Psoas muscle (tissue), 8 donors: ENCODE measurements at regions of chr7 and their contacts with region 1.

Region 1: DNA sequence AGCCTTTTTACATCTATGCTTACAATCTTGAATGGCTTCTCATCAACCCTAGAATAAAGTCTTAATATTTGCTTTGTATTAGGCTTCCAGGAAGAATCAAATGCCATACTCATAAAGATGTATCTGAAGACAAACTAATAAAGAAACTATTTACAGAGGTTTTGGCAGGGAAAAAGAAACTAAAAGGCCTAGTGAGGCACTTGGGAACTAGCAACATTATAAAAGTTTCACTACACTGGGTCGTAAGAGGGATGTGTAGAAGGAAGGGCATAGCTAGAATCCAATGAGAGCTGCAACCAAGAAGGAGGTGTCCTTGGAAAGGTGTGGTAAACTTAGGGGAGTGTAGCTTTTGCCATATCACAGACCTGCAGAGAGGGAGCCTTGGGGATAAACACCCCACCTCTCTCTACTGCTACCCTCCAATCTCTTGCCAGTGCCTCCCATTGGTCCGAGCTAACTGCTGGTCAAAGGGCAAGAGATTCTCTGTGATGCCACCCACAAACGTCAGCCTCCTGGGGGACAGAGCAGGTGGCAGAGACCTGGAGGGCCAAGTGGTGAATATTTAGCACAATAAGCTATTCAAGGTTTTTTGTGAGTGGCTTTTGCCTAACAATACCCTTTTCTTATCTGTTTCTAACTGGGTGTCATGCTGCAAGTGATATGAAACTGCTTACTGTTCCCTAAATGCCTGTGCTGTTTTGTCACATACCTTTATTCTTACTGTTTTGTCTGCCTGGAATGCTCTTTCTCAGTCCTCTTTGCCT is 60.7 kb downstream of the CPED1 start:
- DNase-seq: no peak
- ATAC-seq: peak in 1 of 4 donors; percentile 8
- H3K4me3 ChIP-seq: no peak overlapping the region
- H3K27ac ChIP-seq: peak overlapping the region; percentile 54
- H3K4me1 ChIP-seq: peaks cover 28% of the 10 kb centered on the region
- H3K27me3 ChIP-seq: no peaks in the 10 kb centered on the region
- CTCF ChIP-seq: no peak

Region 2: DNA sequence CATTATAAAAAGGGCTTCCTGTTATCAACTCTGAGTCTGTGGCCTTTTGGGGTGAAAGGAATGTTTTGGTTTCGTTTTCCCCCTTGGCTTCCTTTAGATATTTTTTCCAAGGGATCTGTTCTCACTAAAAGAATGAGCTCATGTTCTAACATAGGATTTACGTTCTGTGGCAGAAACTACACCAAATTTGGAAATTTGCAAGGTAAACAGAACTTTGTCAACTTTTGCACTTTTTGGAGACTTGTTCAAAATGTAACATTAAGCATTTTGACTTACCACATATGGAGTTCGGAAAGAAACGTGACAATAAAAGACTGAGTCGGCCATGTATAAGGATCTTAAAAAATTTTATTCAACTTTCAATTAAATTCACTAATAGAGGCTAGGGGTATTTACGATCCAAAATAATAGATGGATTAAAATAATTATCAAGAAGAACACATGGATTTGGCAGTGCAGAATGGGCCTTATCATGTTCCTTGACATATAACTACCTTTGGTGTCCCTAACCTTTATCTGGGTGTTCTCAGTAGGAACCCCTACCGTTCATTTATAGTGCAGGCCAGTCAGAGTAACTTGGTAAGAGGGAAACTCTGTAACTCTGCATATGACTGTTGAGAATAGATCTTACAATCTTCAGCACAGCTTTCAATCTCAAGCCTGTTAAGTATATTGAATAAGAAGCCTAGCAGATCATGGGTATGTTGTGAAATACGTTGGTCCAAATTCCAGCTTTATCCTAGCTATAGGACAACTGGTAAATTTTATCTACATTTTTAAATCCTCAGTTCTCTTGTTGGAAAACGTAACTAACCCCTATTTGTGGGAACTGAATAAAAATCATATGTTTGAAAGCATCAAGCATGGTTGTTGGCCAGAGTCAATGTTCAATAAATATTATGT is 48.9 kb before region 1 on chr7:
- intact Hi-C with region 1: loop called in 1 of 2 experiments (anchors 5 kb)
- DNase-seq: no peak
- ATAC-seq: no peak
- H3K4me3 ChIP-seq: peak overlapping the region; percentile 42
- H3K27ac ChIP-seq: peak overlapping the region; percentile 72
- H3K4me1 ChIP-seq: peaks cover 77% of the 10 kb centered on the region
- H3K27me3 ChIP-seq: no peaks in the 10 kb centered on the region
- CTCF ChIP-seq: no peak

Region 3: GRCh38 chr7:121204537-121204936 is 155.3 kb after region 1 on chr7:
- intact Hi-C with region 1: no loop called
- DNase-seq: peak in 1 of 2 donors; percentile 48
- ATAC-seq: peak; percentile 40 to 79 (median 75)
- H3K4me3 ChIP-seq: no peak overlapping the region
- H3K27ac ChIP-seq: peak overlapping the region; percentile 65
- H3K4me1 ChIP-seq: peaks cover 35% of the 10 kb centered on the region
- H3K27me3 ChIP-seq: no peaks in the 10 kb centered on the region
- CTCF ChIP-seq: no peak